Heart right ventricle (tissue), 16 donors: ENCODE measurements at regions of chr13 and their contacts with region 1.

Region 1: GRCh38 chr13:110306960-110307746 is at the starts of genes COL4A1 and COL4A2:
- DNase-seq: peak; percentile 81 to 86
- ATAC-seq: peak; percentile 69 to 88 (median 82)
- H3K4me3 ChIP-seq: peak within 1 kb of the TSS; percentile 81 to 98 (median 96)
- H3K27ac ChIP-seq: peak within 1 kb of the TSS; percentile 95 to 99 (median 97)
- H3K4me1 ChIP-seq: peaks cover 30 to 75% (median 66%) of the 10 kb centered on the region in 9 donors
- H3K27me3 ChIP-seq: peaks cover 0 to 85% (median 0%) of the 10 kb centered on the region in 7 donors
- CTCF ChIP-seq: peak in 2 of 9 donors; percentile 5 to 7
- total RNA-seq, gene COL4A1: 96.3 to 342 (median 147) TPM
- total RNA-seq, gene COL4A2: 81.7 to 301 (median 128) TPM

Region 2: GRCh38 chr13:110220471-110220870 is 86.7 kb before region 1 on chr13:
- intact Hi-C with region 1: loop called in 3 of 10 experiments (anchors 5 to 10 kb)
- DNase-seq: no peak
- ATAC-seq: no peak
- H3K4me3 ChIP-seq: no peak overlapping the region
- H3K27ac ChIP-seq: peak overlapping the region in 8 of 10 donors; percentile 32 to 90 (median 85)
- H3K4me1 ChIP-seq: peaks cover 8 to 94% (median 75%) of the 10 kb centered on the region in 9 donors
- H3K27me3 ChIP-seq: no peaks in the 10 kb centered on the region
- CTCF ChIP-seq: no peak

Region 3: GRCh38 chr13:110233181-110233950 is 73.8 kb before region 1 on chr13:
- intact Hi-C with region 1: loop called in 6 of 10 experiments (anchors 5 to 10 kb)
- DNase-seq: peak; percentile 29 to 78
- ATAC-seq: peak in 7 of 8 donors; percentile 31 to 66 (median 55)
- H3K4me3 ChIP-seq: peak overlapping the region in 4 of 10 donors; percentile 14 to 36 (median 26)
- H3K27ac ChIP-seq: peak overlapping the region; percentile 68 to 89 (median 80)
- H3K4me1 ChIP-seq: peaks cover 40 to 95% (median 86%) of the 10 kb centered on the region in 9 donors
- H3K27me3 ChIP-seq: no peaks in the 10 kb centered on the region
- CTCF ChIP-seq: no peak

Region 4: GRCh38 chr13:110274687-110275086 is 32.5 kb before region 1 on chr13:
- intact Hi-C with region 1: loop called in 3 of 10 experiments (anchors 5 kb)
- DNase-seq: no peak
- ATAC-seq: peak in 6 of 8 donors; percentile 16 to 47 (median 32)
- H3K4me3 ChIP-seq: no peak overlapping the region
- H3K27ac ChIP-seq: peak overlapping the region in 3 of 10 donors; percentile 0 to 27 (median 3)
- H3K4me1 ChIP-seq: peaks cover 10 to 100% (median 60%) of the 10 kb centered on the region in 9 donors
- H3K27me3 ChIP-seq: no peaks in the 10 kb centered on the region
- CTCF ChIP-seq: peak in 7 of 9 donors; percentile 31 to 59 (median 46)

Region 5: GRCh38 chr13:110715395-110716235 is 408.5 kb after region 1 on chr13:
- intact Hi-C with region 1: loop called in 1 of 10 experiments (anchors 5 kb)
- DNase-seq: peak; percentile 97 to 99
- ATAC-seq: peak; percentile 68 to 84 (median 81)
- H3K4me3 ChIP-seq: peak overlapping the region; percentile 79 to 98 (median 92)
- H3K27ac ChIP-seq: peak overlapping the region; percentile 17 to 100 (median 100)
- H3K4me1 ChIP-seq: peaks cover 4 to 33% (median 28%) of the 10 kb centered on the region in 9 donors
- H3K27me3 ChIP-seq: no peaks in the 10 kb centered on the region
- CTCF ChIP-seq: peak in 6 of 9 donors; percentile 9 to 55 (median 34)